Activated naive CD8-positive, alpha-beta T cell treated with anti-CD3 and anti-CD28 coated beads, Interleukin-2, amount 10 ng/mL, durations not matched to agents 7 days and 5 days (primary cell): ENCODE measurements at regions of chr1 and their contacts with region 1.

Region 1: GRCh38 chr1:246709835-246710234 is 14.4 kb upstream of the SCCPDH start:
- DNase-seq: no peak
- ATAC-seq: no peak
- H3K4me3 Mint-ChIP-seq: no peak overlapping the region
- H3K27ac Mint-ChIP-seq: no peak overlapping the region
- H3K4me1 Mint-ChIP-seq: peaks cover 15% of the 10 kb centered on the region
- H3K27me3 Mint-ChIP-seq: peaks cover 8% of the 10 kb centered on the region

Region 2: DNA sequence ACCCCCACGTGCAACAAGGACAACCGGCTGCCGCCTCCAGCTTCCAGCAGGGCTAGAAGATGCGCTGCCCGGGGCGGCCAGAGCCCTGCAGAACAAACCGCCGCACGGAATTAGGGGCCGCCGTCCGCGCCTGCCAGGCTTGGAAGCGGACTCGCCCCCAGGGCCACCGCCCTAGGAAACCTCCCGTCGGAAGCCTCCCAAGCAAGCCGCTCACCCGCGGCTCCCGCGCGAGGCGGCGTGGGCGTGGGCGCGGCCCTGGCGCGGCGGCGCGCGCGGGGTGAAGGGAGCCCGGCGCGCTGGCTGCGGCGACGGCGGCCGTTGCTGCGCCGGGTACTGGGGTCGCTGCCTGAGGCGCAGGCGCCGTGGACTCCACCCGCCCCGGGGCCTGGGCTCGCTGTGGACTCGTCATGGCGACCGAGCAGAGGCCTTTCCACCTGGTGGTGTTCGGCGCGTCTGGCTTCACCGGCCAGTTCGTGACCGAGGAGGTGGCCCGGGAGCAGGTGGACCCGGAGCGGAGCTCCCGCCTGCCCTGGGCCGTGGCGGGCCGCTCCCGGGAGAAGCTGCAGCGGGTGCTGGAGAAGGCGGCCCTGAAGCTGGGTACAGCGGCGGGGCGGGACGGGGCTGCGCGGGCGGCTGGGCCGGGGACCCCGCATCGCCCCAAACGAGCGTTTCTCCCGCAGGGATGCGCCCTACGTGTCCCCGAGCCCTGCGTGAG is 14.3 kb after region 1 on chr1 and contains the start of gene SCCPDH:
- POLR2A ChIA-PET with region 1: interaction called, 10 read pairs
- DNase-seq: peak; percentile 83
- ATAC-seq: peak; percentile 96
- H3K4me3 Mint-ChIP-seq: peak within 1 kb of the TSS; percentile 96
- H3K27ac Mint-ChIP-seq: peak within 1 kb of the TSS; percentile 84
- H3K4me1 Mint-ChIP-seq: peaks cover 12% of the 10 kb centered on the region
- H3K27me3 Mint-ChIP-seq: peaks cover 3% of the 10 kb centered on the region
- total RNA-seq, gene SCCPDH: 13.7 to 14.4 TPM

Region 3: DNA sequence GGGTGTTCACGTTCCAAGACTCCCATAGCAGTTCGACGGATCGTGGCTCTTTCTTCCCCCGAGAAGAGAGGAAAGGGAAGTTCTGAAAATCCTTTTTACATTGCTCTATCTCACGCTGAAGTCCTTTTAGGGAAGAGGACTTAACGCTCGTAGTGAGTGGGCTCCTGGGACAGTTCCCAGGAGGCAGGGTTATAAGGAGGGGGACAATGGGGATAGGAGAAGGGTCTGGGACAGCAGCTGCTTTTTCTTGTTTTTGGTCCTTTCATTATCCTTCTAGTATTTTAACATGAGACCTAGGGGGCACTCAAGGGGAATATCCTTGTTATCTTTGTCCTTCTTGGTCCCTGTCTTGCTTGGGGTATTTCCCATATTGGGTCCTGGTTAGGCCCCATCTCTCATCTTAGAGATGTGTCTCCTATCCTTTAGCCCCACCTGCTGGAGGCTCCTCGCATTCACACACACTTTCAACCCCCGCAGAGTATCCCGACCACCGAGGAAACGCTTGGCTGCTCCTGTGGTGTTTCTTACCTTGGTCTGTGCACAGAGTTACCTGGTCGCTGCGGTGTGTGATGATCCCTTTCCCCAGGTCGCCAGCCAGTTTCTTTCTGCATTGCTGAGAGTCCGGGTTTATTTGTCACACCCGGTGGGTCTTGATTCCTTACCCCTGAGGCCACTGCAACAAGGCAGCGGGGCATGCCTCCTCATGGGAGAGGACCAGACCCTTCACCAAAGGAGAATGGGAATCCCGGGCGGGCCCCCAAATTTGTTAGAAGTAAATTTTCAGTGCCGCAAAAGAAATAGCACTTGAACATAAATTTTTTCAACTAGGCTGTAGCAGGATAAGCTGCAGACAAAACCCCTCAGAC is 44.1 kb after region 1 on chr1:
- POLR2A ChIA-PET with region 1: no interaction called
- DNase-seq: peak; percentile 61
- ATAC-seq: peak; percentile 89
- H3K4me3 Mint-ChIP-seq: no peak overlapping the region
- H3K27ac Mint-ChIP-seq: no peak overlapping the region
- H3K4me1 Mint-ChIP-seq: no peaks in the 10 kb centered on the region
- H3K27me3 Mint-ChIP-seq: no peaks in the 10 kb centered on the region